ENCODE measurements at regions of chr4 and their contacts with region 1.

Region 1: DNA sequence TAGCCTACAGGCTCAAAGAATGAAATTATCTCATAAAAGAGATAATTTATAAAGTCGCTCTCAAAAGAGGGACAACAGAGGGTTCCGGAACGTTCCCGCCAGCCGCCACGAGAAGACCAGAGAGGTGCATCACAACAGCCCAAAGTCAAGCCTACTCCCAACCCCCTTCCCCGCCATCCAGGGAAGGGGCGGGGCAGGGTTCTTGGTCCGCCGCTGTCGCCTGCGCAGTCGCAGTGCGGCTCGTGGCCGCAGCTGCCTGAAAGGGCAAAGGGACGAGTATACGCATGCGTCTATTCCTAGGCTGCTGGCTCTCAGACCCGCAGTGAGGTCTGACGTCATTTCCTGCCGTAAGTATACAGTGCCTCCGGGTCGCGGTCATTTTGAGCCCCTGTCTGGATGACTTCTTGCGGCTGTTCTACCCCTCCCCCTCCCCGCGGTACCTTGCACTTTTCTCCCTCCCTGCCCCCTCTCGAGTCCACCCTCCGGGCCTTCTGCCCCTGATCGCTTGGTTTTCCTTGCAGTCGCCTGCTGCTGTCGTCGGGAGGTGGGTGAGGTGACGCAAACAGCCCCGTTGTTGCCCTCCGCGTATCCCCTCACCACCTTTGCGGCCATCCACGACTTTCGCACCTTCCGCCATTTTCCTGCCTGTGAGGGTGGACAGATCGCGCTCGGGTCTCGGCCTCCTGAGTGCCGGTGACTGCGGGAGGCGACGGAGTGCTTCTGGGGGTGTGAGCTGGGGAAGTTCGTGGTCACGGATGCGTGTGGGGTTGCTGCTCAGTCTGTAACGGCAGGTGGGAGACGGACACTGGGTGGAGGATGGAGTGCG is at the start of gene OCIAD1:
- DNase-seq: peak; percentile 99
- ATAC-seq: peak; percentile 97
- H3K4me3 ChIP-seq: peak within 1 kb of the TSS; percentile 99
- H3K27ac ChIP-seq: peak within 1 kb of the TSS; percentile 92
- H3K4me1 ChIP-seq: peaks cover 9 to 17% of the 10 kb centered on the region in 2 experiments
- H3K27me3 ChIP-seq: no peaks in the 10 kb centered on the region
- CTCF ChIP-seq: no peak
- POLR2A ChIP-seq: peak; percentile 78
- RAD21 ChIP-seq: no peak
- total RNA-seq, gene OCIAD1: 163 TPM

Region 2: DNA sequence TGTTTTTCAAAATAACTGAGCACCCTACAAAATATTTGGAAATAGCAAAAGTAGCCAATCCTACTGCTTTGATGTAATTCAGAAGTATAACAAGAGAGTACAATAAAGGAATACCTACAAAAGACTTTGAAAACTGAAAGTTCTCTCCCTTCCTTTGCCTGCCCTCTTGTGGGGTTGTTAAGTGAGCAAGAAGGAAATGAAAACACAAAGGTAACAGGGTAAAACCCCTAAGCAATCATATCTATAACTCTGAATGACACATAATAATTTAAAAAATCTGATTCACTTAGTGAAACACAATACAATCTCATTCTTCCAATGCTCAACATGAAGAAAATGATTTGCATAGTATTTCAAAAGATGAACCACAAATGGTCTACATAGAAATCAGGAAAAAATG is 149.1 kb before region 1 on chr4:
- CTCF ChIA-PET with region 1: no interaction called
- POLR2A ChIA-PET with region 1: no interaction called
- RAD21 ChIA-PET with region 1: no interaction called
- intact Hi-C with region 1: loop called (anchors 10 kb)
- DNase-seq: no peak
- ATAC-seq: no peak
- H3K4me3 ChIP-seq: no peak overlapping the region
- H3K27ac ChIP-seq: no peak overlapping the region
- H3K4me1 ChIP-seq: no peaks in the 10 kb centered on the region
- H3K27me3 ChIP-seq: no peaks in the 10 kb centered on the region
- CTCF ChIP-seq: peak in 2 of 3 experiments; percentile 32 to 34; a peak in 3 of 6 replicates
- POLR2A ChIP-seq: no peak
- RAD21 ChIP-seq: peak; percentile 51

Region 3: DNA sequence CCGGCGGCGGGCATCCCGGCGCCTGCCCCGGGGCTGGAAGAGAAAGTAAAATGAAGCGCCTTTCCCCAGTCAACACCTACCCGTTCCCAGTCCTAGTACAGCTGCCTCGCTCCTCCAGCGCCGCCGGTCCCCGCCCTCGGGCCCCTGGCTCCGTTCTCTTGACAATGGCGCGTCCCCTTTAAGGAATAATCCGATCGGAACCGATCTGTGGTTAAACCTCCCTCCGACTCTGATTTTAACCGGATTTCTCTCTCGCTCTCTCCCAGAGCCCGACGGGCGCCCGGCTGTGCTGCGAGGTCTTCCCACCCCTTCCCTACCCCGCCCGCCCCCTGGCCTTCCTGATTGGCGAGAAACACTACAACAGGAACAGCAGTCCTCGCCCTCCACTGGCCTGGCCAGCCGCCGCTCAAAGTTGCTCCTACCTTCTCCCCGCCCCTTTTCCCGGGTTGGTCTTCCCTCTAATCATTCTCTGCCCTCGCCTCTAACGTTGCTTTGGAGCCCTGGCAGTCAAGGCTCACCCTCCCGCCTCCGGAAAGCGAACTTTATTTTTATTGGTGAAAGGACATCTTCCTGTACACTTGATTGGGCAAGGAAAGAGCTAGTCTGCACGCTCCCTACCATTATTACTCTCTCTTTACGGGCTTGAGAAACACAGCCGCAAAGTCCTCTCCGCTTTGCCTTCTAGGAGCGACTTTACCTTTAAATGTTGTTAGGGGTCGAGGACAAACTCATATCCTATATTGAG is 50.7 kb before region 1 on chr4 and contains the start of gene FRYL:
- CTCF ChIA-PET with region 1: no interaction called
- POLR2A ChIA-PET with region 1: interaction called, 3 read pairs
- RAD21 ChIA-PET with region 1: no interaction called
- intact Hi-C with region 1: loop called (anchors 5 kb)
- DNase-seq: peak; percentile 99
- ATAC-seq: peak; percentile 93
- H3K4me3 ChIP-seq: peak within 1 kb of the TSS; percentile 68 to 71
- H3K27ac ChIP-seq: peak within 1 kb of the TSS; percentile 86
- H3K4me1 ChIP-seq: peaks cover 8 to 24% of the 10 kb centered on the region in 2 experiments
- H3K27me3 ChIP-seq: no peaks in the 10 kb centered on the region
- CTCF ChIP-seq: no peak
- POLR2A ChIP-seq: peak; percentile 75
- RAD21 ChIP-seq: no peak
- total RNA-seq, gene FRYL: 47.7 TPM

Region 4: GRCh38 chr4:48844843-48845242 is 13.9 kb after region 1 on chr4:
- CTCF ChIA-PET with region 1: no interaction called
- POLR2A ChIA-PET with region 1: no interaction called
- RAD21 ChIA-PET with region 1: no interaction called
- intact Hi-C with region 1: loop called (anchors 1 kb)
- DNase-seq: no peak
- ATAC-seq: no peak
- H3K4me3 ChIP-seq: no peak overlapping the region
- H3K27ac ChIP-seq: no peak overlapping the region
- H3K4me1 ChIP-seq: no peaks in the 10 kb centered on the region
- H3K27me3 ChIP-seq: no peaks in the 10 kb centered on the region
- CTCF ChIP-seq: no peak
- POLR2A ChIP-seq: no peak
- RAD21 ChIP-seq: no peak

Region 5: GRCh38 chr4:48944756-48945241 is 113.9 kb after region 1 on chr4:
- CTCF ChIA-PET with region 1: no interaction called
- POLR2A ChIA-PET with region 1: no interaction called
- RAD21 ChIA-PET with region 1: no interaction called
- intact Hi-C with region 1: loop called (anchors 5 kb)
- DNase-seq: no peak
- ATAC-seq: peak; percentile 70
- H3K4me3 ChIP-seq: peak overlapping the region in 1 of 2 experiments; percentile 24; a peak in 3 of 4 replicates
- H3K27ac ChIP-seq: peak overlapping the region; percentile 58
- H3K4me1 ChIP-seq: peaks cover 12 to 27% of the 10 kb centered on the region in 2 experiments
- H3K27me3 ChIP-seq: no peaks in the 10 kb centered on the region
- CTCF ChIP-seq: peak; percentile 45 to 90 (median 88); a peak in 5 of 6 replicates
- POLR2A ChIP-seq: no peak
- RAD21 ChIP-seq: peak; percentile 39

Region 6: GRCh38 chr4:49032440-49033161 is 201.7 kb after region 1 on chr4:
- CTCF ChIA-PET with region 1: no interaction called
- POLR2A ChIA-PET with region 1: no interaction called
- RAD21 ChIA-PET with region 1: no interaction called
- intact Hi-C with region 1: no loop called
- DNase-seq: peak; percentile 6
- ATAC-seq: peak; percentile 74
- H3K4me3 ChIP-seq: no peak overlapping the region
- H3K27ac ChIP-seq: no peak overlapping the region
- H3K4me1 ChIP-seq: no peaks in the 10 kb centered on the region
- H3K27me3 ChIP-seq: peaks cover 17% of the 10 kb centered on the region
- CTCF ChIP-seq: peak in 2 of 3 experiments; percentile 74 to 89; a peak in 4 of 6 replicates
- POLR2A ChIP-seq: no peak
- RAD21 ChIP-seq: peak; percentile 76